ENCODE measurements at regions of chr20 and their contacts with region 1.

Region 1: GRCh38 chr20:44866703-44867335 is 18.7 kb upstream of the YWHAB start:
- DNase-seq: no peak
- H3K4me3 ChIP-seq: no peak overlapping the region
- H3K27ac ChIP-seq: no peak overlapping the region
- H3K4me1 ChIP-seq: no peaks in the 10 kb centered on the region
- H3K27me3 ChIP-seq: no peaks in the 10 kb centered on the region
- CTCF ChIP-seq: no peak

Region 2: DNA sequence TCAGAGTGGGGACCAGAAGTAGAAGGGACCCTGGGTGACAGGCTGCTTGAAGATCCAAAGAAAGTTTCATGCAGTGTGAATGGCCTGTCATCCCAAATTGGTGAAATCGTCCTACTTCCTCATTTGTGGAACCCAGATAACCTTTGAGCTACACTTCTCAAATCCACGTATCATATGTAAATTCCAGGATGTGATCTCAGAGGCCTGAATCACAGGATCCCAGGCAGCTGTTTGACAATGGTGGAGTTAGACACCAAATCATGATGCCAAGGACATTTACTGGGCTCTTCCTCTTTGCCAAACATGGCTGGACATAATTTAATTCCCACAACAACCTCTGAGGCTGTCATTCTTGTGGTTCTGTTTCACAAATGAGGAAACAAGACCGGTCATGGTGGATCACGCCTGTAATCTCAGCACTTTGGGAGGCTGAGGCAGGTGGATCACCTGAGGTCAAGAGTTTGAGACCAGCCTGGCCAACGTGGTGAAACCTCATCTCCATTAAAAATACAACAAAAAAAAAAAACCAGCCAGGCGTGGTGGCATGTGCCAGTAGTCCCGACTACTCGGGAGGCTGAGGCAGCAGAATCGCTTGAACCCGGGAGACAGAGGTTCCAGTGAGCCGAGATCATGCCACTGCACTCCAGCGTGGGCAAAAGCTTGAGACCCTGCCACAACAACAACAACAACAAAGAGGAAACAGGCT is 431.0 kb before region 1 on chr20:
- CTCF ChIA-PET with region 1: no interaction called
- POLR2A ChIA-PET with region 1: no interaction called
- intact Hi-C with region 1: no loop called
- DNase-seq: no peak
- H3K4me3 ChIP-seq: no peak overlapping the region
- H3K27ac ChIP-seq: no peak overlapping the region
- H3K4me1 ChIP-seq: no peaks in the 10 kb centered on the region
- H3K27me3 ChIP-seq: peaks cover 19% of the 10 kb centered on the region
- CTCF ChIP-seq: no peak

Region 3: GRCh38 chr20:44683263-44684046 is 183.4 kb before region 1 on chr20:
- CTCF ChIA-PET with region 1: interaction called, 7 read pairs
- POLR2A ChIA-PET with region 1: no interaction called
- intact Hi-C with region 1: loop called (anchors 1 kb)
- DNase-seq: no peak
- H3K4me3 ChIP-seq: no peak overlapping the region
- H3K27ac ChIP-seq: no peak overlapping the region
- H3K4me1 ChIP-seq: no peaks in the 10 kb centered on the region
- H3K27me3 ChIP-seq: no peaks in the 10 kb centered on the region
- CTCF ChIP-seq: no peak

Region 4: GRCh38 chr20:44747166-44748004 is 119.4 kb before region 1 on chr20:
- CTCF ChIA-PET with region 1: interaction called, 7 read pairs
- POLR2A ChIA-PET with region 1: no interaction called
- intact Hi-C with region 1: loop called (anchors 1 kb)
- DNase-seq: peak; percentile 87
- H3K4me3 ChIP-seq: no peak overlapping the region
- H3K27ac ChIP-seq: no peak overlapping the region
- H3K4me1 ChIP-seq: peaks cover 14% of the 10 kb centered on the region
- H3K27me3 ChIP-seq: peaks cover 18% of the 10 kb centered on the region
- CTCF ChIP-seq: peak; percentile 82

Region 5: DNA sequence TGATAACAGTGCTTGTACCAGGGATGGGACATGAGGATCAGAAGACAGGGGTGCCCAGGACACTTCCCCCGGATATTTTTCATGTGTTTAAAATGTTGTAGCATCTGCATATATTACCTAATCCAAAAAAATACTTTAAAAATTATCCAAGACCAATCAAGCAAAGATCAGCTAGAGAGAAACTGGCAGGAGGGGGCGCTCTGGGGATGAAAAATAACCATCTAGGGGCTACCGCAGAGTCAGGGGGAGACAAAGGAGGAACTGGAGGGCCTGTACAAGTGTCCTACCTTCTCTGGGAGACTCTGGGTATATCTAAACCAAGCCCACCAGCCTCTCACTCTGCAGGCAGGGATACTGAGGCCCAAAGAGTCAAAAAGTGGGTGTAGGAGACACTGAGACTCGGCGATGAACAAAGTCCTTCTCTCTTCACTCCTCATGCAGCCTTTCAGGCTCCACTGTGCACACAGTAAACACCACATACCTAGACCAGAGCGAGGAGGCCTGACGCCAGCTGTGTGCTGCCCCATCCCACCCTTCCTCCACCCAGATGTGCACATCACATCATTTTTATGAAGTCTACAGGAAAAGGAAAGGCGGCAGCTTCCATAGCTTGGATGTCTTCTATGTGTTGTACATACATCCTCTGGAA is 66.3 kb before region 1 on chr20:
- CTCF ChIA-PET with region 1: no interaction called
- POLR2A ChIA-PET with region 1: no interaction called
- intact Hi-C with region 1: loop called (anchors 1 kb)
- DNase-seq: no peak
- H3K4me3 ChIP-seq: no peak overlapping the region
- H3K27ac ChIP-seq: no peak overlapping the region
- H3K4me1 ChIP-seq: no peaks in the 10 kb centered on the region
- H3K27me3 ChIP-seq: peaks cover 20% of the 10 kb centered on the region
- CTCF ChIP-seq: peak; percentile 69

Region 6: GRCh38 chr20:45036044-45036755 is 169.4 kb after region 1 on chr20:
- CTCF ChIA-PET with region 1: no interaction called
- POLR2A ChIA-PET with region 1: no interaction called
- intact Hi-C with region 1: no loop called
- DNase-seq: peak; percentile 12
- H3K4me3 ChIP-seq: no peak overlapping the region
- H3K27ac ChIP-seq: peak overlapping the region; percentile 40
- H3K4me1 ChIP-seq: peaks cover 19% of the 10 kb centered on the region
- H3K27me3 ChIP-seq: no peaks in the 10 kb centered on the region
- CTCF ChIP-seq: no peak